ENCODE measurements at regions of chr9 and their contacts with region 1.

Region 1: DNA sequence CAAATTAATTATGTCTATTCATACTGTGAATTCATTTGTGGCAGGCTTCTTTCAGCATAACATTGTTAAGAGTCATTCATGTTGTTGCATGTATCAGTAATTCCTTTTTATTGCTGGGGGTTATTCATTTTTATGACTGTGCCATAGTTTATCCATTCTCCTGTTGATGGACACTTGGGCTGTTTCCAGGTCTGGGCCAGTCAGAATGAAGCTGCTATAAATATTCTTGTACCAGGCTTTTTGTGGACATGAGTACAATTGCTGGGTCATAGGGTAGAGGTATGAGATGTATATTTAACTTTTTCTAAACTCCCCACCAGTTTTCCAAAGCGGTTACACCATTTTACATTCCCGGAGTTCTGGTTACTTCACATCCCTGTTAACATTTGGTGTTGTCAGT is 13.6 kb downstream of the PRPF4 start:
- DNase-seq: no peak
- ATAC-seq: peak; percentile 55 to 75 (median 66)
- H3K4me3 ChIP-seq: no peak overlapping the region
- H3K27ac ChIP-seq: peak overlapping the region in 5 of 12 donors; percentile 13 to 39 (median 15)
- H3K4me1 ChIP-seq: peaks cover 0 to 13% (median 0%) of the 10 kb centered on the region in 12 donors
- H3K27me3 ChIP-seq: no peaks in the 10 kb centered on the region
- CTCF ChIP-seq: no peak
- POLR2A ChIP-seq: no peak

Region 2: GRCh38 chr9:113187935-113188595 is 101.0 kb before region 1 on chr9:
- intact Hi-C with region 1: loop called in 1 of 10 experiments (anchors 5 kb)
- DNase-seq: peak; percentile 26 to 70 (median 41)
- ATAC-seq: peak; percentile 78 to 96 (median 95)
- H3K4me3 ChIP-seq: peak overlapping the region in 2 of 12 donors; percentile 6 to 37
- H3K27ac ChIP-seq: peak overlapping the region in 10 of 12 donors; percentile 14 to 89 (median 44)
- H3K4me1 ChIP-seq: peaks cover 0 to 36% (median 0%) of the 10 kb centered on the region in 12 donors
- H3K27me3 ChIP-seq: no peaks in the 10 kb centered on the region
- CTCF ChIP-seq: no peak
- POLR2A ChIP-seq: peak in 1 of 2 donors; percentile 39

Region 3: GRCh38 chr9:113355040-113355596 is 66.0 kb after region 1 on chr9:
- intact Hi-C with region 1: no loop called
- DNase-seq: no peak
- ATAC-seq: no peak
- H3K4me3 ChIP-seq: no peak overlapping the region
- H3K27ac ChIP-seq: no peak overlapping the region
- H3K4me1 ChIP-seq: peaks cover 0 to 12% (median 2%) of the 10 kb centered on the region in 12 donors
- H3K27me3 ChIP-seq: peaks cover 0 to 30% (median 5%) of the 10 kb centered on the region in 9 donors
- CTCF ChIP-seq: no peak
- POLR2A ChIP-seq: no peak

Measured in heart left ventricle (tissue), 16 donors.